ENCODE measurements at regions of chr5 and their contacts with region 1.

Region 1: DNA sequence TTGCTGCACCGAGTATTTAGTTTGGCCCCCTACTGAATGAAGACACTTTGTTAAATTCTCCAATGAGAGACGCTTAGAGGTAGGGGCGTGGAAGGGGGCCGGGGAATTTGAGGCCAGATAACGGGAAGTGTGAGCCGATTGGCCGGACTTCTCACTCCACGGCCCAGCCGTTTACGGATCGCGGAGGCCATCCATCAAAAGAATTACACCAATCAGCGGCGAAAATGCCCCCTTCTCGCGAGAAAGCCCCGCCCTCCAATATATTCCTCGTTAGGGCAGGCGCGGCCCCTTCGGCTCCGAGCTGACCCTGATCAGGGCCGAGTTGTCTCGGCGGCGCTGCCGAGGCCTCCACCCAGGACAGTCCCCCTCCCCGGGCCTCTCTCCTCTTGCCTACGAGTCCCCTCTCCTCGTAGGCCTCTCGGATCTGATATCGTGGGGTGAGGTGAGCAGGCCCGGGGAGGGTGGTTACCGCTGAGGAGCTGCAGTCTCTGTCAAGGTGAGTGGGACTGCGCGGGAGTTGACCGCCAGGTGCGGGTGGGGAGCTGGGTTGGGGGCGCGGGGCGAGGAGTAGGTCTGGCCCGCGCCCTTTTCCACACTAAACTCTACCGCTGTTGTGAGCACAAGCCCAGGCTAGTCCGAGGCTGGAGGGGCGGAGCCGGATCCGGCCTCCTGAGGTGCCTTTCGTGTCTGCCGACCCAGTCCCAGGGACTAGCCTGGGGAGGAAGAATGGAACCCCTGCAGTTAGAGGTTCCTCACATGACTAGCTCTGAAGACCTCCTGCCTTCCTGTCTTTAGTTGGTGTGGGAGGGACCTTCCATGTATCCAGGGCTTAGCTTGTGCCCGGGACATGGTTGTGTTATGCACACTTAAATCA is at the start of gene CCNG1:
- DNase-seq: peak; percentile 71 to 96 (median 88)
- ATAC-seq: peak; percentile 93
- H3K4me3 ChIP-seq: peak within 1 kb of the TSS; percentile 87 to 93
- H3K4me3 Mint-ChIP-seq: peak within 1 kb of the TSS; percentile 95
- H3K27ac ChIP-seq: peak within 1 kb of the TSS; percentile 79 to 80
- H3K27ac Mint-ChIP-seq: peak within 1 kb of the TSS; percentile 95
- H3K4me1 ChIP-seq: peaks cover 30% of the 10 kb centered on the region
- H3K4me1 Mint-ChIP-seq: peaks cover 53% of the 10 kb centered on the region
- H3K27me3 ChIP-seq: no peaks in the 10 kb centered on the region
- H3K27me3 Mint-ChIP-seq: no peaks in the 10 kb centered on the region
- CTCF ChIP-seq: no peak
- total RNA-seq, gene CCNG1: 114 to 126 TPM

Region 2: DNA sequence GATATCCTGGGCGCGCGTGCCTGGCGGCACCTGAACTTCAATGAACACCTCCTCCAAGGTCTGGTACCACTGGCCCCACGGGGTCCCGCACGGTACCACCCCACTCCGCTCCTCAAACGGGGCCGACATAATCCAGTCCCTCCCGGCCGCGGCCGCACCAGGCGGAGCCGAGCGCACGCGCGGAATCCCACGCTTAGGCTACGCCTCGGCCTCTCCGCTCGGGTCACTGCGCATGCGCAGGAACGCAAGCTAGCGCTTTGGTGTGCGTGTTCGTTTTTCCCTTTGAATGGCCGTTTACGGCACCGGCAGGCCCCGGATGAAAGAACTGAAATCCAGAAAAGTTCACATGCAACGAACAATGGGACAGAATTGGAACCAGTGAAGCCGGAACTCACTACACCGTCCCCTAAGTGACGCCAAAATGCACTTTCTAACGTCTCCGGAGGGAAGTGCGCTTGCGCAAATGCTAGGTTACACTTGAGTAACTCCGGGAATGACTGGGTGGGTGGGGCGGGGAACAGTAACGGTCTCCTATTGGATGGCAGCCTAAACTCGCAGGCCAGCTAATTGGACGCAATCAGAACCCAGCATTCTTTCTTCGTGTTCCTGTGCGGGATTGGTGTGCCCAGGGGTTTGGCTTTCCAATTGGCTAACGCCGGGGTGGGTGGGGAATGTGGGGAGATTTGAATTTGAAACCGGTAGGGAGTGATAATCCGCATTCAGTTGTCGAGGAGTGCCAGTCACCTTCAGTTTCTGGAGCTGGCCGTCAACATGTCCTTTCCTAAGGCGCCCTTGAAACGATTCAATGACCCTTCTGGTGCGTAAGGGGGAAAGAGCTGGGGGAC is 22.6 kb after region 1 on chr5 and contains the starts of genes HMMR and NUDCD2:
- CTCF ChIA-PET with region 1: interaction called, 20 read pairs
- POLR2A ChIA-PET with region 1: interaction called, 83 read pairs
- intact Hi-C with region 1: loop called (anchors 1 kb)
- DNase-seq: peak; percentile 86 to 98 (median 94)
- ATAC-seq: peak; percentile 82
- H3K4me3 ChIP-seq: peak within 1 kb of the TSS; percentile 77 to 79
- H3K4me3 Mint-ChIP-seq: peak within 1 kb of the TSS; percentile 97
- H3K27ac ChIP-seq: peak within 1 kb of the TSS; percentile 90 to 97
- H3K27ac Mint-ChIP-seq: peak within 1 kb of the TSS; percentile 99
- H3K4me1 ChIP-seq: peaks cover 38% of the 10 kb centered on the region
- H3K4me1 Mint-ChIP-seq: peaks cover 48% of the 10 kb centered on the region
- H3K27me3 ChIP-seq: no peaks in the 10 kb centered on the region
- H3K27me3 Mint-ChIP-seq: no peaks in the 10 kb centered on the region
- CTCF ChIP-seq: no peak
- total RNA-seq, gene HMMR: 0.67 to 0.76 TPM
- total RNA-seq, gene NUDCD2: 16.5 to 17.7 TPM

Region 3: GRCh38 chr5:163478126-163478981 is 40.8 kb after region 1 on chr5:
- CTCF ChIA-PET with region 1: no interaction called
- POLR2A ChIA-PET with region 1: no interaction called
- intact Hi-C with region 1: no loop called
- DNase-seq: no peak
- ATAC-seq: no peak
- H3K4me3 ChIP-seq: no peak overlapping the region
- H3K4me3 Mint-ChIP-seq: no peak overlapping the region
- H3K27ac ChIP-seq: no peak overlapping the region
- H3K27ac Mint-ChIP-seq: no peak overlapping the region
- H3K4me1 ChIP-seq: no peaks in the 10 kb centered on the region
- H3K4me1 Mint-ChIP-seq: no peaks in the 10 kb centered on the region
- H3K27me3 ChIP-seq: no peaks in the 10 kb centered on the region
- H3K27me3 Mint-ChIP-seq: no peaks in the 10 kb centered on the region
- CTCF ChIP-seq: no peak

Region 4: DNA sequence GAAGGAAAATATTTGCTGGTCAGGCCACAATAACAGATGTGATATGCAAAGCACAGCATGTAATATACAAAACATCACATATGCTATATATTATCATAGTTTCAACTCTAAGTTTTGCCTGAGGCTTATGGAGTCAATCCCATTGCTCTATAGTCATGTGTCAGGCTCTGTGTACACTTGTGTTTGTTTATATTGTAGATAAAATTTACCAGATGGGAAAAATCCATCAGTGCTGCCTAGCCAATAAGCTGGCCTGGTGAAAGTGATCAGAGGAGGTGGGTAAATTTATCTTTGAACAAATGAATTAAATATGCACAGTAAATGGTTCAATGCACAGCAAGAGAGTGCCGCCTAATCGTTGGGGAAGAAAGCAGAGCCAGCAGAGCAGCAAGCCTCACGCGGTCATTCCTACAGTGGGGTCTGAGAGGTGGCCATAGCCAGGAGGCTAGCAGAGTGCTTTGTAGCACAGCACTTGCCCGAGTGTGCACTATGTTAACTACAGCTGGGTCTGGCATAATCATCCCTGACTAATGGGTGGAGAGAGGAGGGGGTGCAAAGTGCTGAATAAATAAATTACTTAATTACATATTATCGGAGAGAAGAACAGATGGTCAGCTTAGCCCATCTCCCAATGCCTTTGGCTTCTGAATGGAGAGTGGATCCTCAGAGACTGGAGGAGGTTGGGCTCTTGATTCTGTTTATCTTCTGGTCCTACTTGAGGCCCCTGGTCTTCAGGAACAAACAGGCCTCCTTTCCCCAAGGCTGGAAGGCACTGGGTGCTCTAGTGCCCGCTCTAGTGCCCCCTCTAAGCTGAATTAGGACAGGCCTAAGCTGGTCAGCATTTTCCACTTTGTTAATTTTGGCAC is 221.4 kb after region 1 on chr5:
- CTCF ChIA-PET with region 1: no interaction called
- POLR2A ChIA-PET with region 1: no interaction called
- intact Hi-C with region 1: no loop called
- DNase-seq: no peak
- ATAC-seq: no peak
- H3K4me3 ChIP-seq: no peak overlapping the region
- H3K4me3 Mint-ChIP-seq: no peak overlapping the region
- H3K27ac ChIP-seq: no peak overlapping the region
- H3K27ac Mint-ChIP-seq: no peak overlapping the region
- H3K4me1 ChIP-seq: no peaks in the 10 kb centered on the region
- H3K4me1 Mint-ChIP-seq: no peaks in the 10 kb centered on the region
- H3K27me3 ChIP-seq: no peaks in the 10 kb centered on the region
- H3K27me3 Mint-ChIP-seq: no peaks in the 10 kb centered on the region
- CTCF ChIP-seq: no peak

Measured in CD8-positive, alpha-beta T cell (primary cell).